Esophagus muscularis mucosa (tissue), 4 donors: ENCODE measurements at regions of chr9 and their contacts with region 1.

Region 1: GRCh38 chr9:93453047-93453914 is at the start of gene FAM120AOS:
- DNase-seq: peak; percentile 99
- H3K4me3 ChIP-seq: peak within 1 kb of the TSS; percentile 77 to 91 (median 81)
- H3K27ac ChIP-seq: peak within 1 kb of the TSS; percentile 96 to 99 (median 98)
- H3K4me1 ChIP-seq: peaks cover 45 to 69% (median 63%) of the 10 kb centered on the region in 4 donors
- H3K27me3 ChIP-seq: no peaks in the 10 kb centered on the region
- CTCF ChIP-seq: no peak
- EP300 ChIP-seq: no peak
- POLR2A ChIP-seq: peak; percentile 18
- total RNA-seq, gene FAM120AOS: 51.7 to 63.6 (median 55.3) TPM

Region 2: GRCh38 chr9:93134015-93134739 is 319.1 kb before region 1 on chr9 and contains the start of gene NINJ1:
- intact Hi-C with region 1: loop called (anchors 10 kb)
- DNase-seq: no peak
- H3K4me3 ChIP-seq: peak within 1 kb of the TSS; percentile 81 to 91 (median 88)
- H3K27ac ChIP-seq: peak within 1 kb of the TSS; percentile 98 to 99 (median 99)
- H3K4me1 ChIP-seq: peaks cover 53 to 68% (median 62%) of the 10 kb centered on the region in 4 donors
- H3K27me3 ChIP-seq: no peaks in the 10 kb centered on the region
- CTCF ChIP-seq: peak in 1 of 3 experiments; percentile 24
- EP300 ChIP-seq: no peak
- POLR2A ChIP-seq: peak; percentile 56
- total RNA-seq, gene NINJ1: 69.3 to 90.6 (median 72.7) TPM

Region 3: GRCh38 chr9:93262537-93263242 is 190.6 kb before region 1 on chr9:
- intact Hi-C with region 1: no loop called
- DNase-seq: peak; percentile 74
- H3K4me3 ChIP-seq: no peak overlapping the region
- H3K27ac ChIP-seq: no peak overlapping the region
- H3K4me1 ChIP-seq: peaks cover 0 to 4% (median 0%) of the 10 kb centered on the region in 4 donors
- H3K27me3 ChIP-seq: no peaks in the 10 kb centered on the region
- CTCF ChIP-seq: no peak
- EP300 ChIP-seq: no peak
- POLR2A ChIP-seq: no peak

Region 4: DNA sequence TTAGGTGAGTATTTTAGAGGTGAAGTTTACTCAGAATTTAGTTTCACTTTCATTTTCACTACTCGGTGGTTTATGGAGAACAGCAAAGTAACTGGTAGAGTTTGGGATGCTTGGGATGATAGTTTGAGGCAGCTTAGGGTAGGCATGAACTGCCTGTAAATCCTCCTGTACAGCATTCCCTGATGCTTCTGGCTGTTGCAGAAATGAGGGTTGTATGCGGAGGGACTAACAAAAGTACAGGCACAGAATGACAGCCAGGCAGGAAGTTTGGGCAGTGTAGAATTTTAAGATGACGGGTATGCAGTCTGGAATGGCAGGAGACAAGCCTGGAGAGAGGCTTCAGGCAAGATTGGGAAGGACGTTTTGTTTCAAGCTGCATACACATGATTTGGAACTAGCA is 48.1 kb after region 1 on chr9:
- intact Hi-C with region 1: loop called (anchors 10 kb)
- DNase-seq: no peak
- H3K4me3 ChIP-seq: peak overlapping the region; percentile 37 to 52 (median 47)
- H3K27ac ChIP-seq: peak overlapping the region; percentile 47 to 62 (median 58)
- H3K4me1 ChIP-seq: peaks cover 10 to 42% (median 38%) of the 10 kb centered on the region in 4 donors
- H3K27me3 ChIP-seq: no peaks in the 10 kb centered on the region
- CTCF ChIP-seq: no peak
- EP300 ChIP-seq: no peak
- POLR2A ChIP-seq: no peak

Region 5: GRCh38 chr9:93566408-93567270 is 113.4 kb after region 1 on chr9:
- intact Hi-C with region 1: loop called (anchors 2 kb)
- DNase-seq: peak; percentile 99
- H3K4me3 ChIP-seq: peak overlapping the region; percentile 55 to 68 (median 64)
- H3K27ac ChIP-seq: peak overlapping the region; percentile 91 to 96 (median 94)
- H3K4me1 ChIP-seq: peaks cover 11 to 17% (median 14%) of the 10 kb centered on the region in 4 donors
- H3K27me3 ChIP-seq: no peaks in the 10 kb centered on the region
- CTCF ChIP-seq: peak; percentile 95 to 99 (median 97)
- EP300 ChIP-seq: no peak
- POLR2A ChIP-seq: peak; percentile 76

Region 6: GRCh38 chr9:93635186-93636111 is 182.2 kb after region 1 on chr9:
- intact Hi-C with region 1: no loop called
- DNase-seq: no peak
- H3K4me3 ChIP-seq: no peak overlapping the region
- H3K27ac ChIP-seq: no peak overlapping the region
- H3K4me1 ChIP-seq: peaks cover 0 to 3% (median under 1%) of the 10 kb centered on the region in 4 donors
- H3K27me3 ChIP-seq: no peaks in the 10 kb centered on the region
- CTCF ChIP-seq: no peak
- EP300 ChIP-seq: no peak
- POLR2A ChIP-seq: no peak

Region 7: GRCh38 chr9:93860694-93861658 is 407.7 kb after region 1 on chr9:
- intact Hi-C with region 1: no loop called
- DNase-seq: peak; percentile 80
- H3K4me3 ChIP-seq: no peak overlapping the region
- H3K27ac ChIP-seq: no peak overlapping the region
- H3K4me1 ChIP-seq: peaks cover 0 to 7% (median 3%) of the 10 kb centered on the region in 4 donors
- H3K27me3 ChIP-seq: peaks cover 0 to 61% (median 7%) of the 10 kb centered on the region in 4 donors
- CTCF ChIP-seq: no peak
- EP300 ChIP-seq: no peak
- POLR2A ChIP-seq: no peak

Region 8: GRCh38 chr9:94952565-94953373 is 1499.5 kb after region 1 on chr9:
- intact Hi-C with region 1: no loop called
- DNase-seq: no peak
- H3K4me3 ChIP-seq: no peak overlapping the region
- H3K27ac ChIP-seq: peak overlapping the region; percentile 51 to 74 (median 62)
- H3K4me1 ChIP-seq: peaks cover 44 to 54% (median 49%) of the 10 kb centered on the region in 4 donors
- H3K27me3 ChIP-seq: no peaks in the 10 kb centered on the region
- CTCF ChIP-seq: no peak
- EP300 ChIP-seq: peak; percentile 46
- POLR2A ChIP-seq: no peak